ENCODE measurements at regions of chr5 and their contacts with region 1.

Region 1: DNA sequence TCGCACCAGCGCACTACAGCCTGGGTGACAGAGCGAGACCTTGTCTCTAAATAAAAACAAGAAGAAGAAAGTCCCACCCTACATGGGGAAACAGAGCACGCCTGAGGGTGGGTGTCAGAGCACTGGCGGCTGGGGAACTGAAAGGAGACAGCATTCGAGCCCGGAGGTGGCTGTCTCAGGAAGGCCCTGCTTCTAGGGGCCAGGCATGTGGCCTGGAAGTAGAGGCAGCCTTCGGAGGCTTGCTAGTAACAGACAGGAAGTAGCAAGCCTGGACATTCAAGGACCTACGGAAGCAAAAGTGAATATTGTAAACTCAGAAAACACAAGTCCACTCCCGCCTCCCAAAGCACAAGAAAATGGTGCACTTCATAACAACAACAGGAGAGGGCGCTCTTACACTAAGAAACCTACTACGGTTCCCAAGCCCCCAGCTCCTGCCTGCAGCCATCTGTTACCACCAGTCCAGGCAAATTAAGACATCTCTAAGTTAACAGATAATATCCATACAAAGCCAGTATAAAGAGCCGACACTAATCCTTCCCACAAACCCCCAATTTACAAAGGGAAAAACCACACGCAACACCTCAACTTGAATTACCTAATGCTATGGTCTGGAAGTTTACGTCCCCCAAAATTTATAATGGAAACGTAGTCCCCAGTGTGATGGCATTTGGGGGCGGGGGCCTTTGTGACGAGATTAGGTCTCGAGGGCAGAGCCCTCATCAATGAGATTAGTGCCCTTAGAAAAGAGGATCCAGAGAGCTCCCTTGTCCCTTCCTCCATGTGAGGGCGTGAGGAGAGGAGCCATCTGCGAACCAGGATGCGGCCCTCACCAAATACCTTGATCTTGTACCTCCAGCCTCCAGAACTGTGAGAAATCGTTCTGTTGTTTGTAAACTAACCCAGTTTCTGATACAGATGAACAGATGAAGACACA is 7.7 kb downstream of the RASGEF1C start:
- DNase-seq: peak; percentile 31
- H3K4me3 Mint-ChIP-seq: no peak overlapping the region
- H3K27ac Mint-ChIP-seq: no peak overlapping the region
- H3K4me1 Mint-ChIP-seq: no peaks in the 10 kb centered on the region
- H3K27me3 Mint-ChIP-seq: peaks cover 11% of the 10 kb centered on the region

Region 2: DNA sequence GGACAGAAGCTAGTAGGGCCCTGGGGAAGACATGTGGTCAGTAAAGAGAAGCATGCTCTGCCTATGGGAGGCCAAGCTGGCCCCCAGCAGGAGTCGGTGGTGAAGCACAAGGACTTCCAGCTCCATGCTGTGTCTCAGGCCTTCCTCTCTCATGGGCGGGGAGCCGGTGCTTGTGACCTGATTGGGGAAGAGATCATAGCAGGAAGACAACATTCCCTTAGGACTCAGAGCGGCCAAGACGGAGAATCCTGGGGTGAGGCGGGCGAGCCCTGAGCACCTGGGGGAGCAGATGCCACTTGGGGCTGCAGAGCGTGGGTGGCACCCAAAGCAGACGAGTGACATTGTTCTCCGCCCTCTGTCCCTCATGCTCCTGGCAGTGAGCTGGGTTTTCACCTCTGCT is 259.5 kb after region 1 on chr5:
- CTCF ChIA-PET with region 1: no interaction called
- intact Hi-C with region 1: no loop called
- DNase-seq: no peak
- H3K4me3 Mint-ChIP-seq: no peak overlapping the region
- H3K27ac Mint-ChIP-seq: no peak overlapping the region
- H3K4me1 Mint-ChIP-seq: no peaks in the 10 kb centered on the region
- H3K27me3 Mint-ChIP-seq: peaks cover 4% of the 10 kb centered on the region

Region 3: GRCh38 chr5:180470966-180471582 is 269.8 kb after region 1 on chr5:
- CTCF ChIA-PET with region 1: no interaction called
- intact Hi-C with region 1: loop called (anchors 5 kb)
- DNase-seq: peak; percentile 53
- H3K4me3 Mint-ChIP-seq: no peak overlapping the region
- H3K27ac Mint-ChIP-seq: no peak overlapping the region
- H3K4me1 Mint-ChIP-seq: no peaks in the 10 kb centered on the region
- H3K27me3 Mint-ChIP-seq: peaks cover 2% of the 10 kb centered on the region

Measured in activated naive CD4-positive, alpha-beta T cell treated with anti-CD3 and anti-CD28 coated beads for 36 hours (primary cell).